ENCODE measurements at regions of chr12 and their contacts with region 1.

Region 1: GRCh38 chr12:77685112-77685511 is 145.6 kb upstream of the NAV3 start:
- DNase-seq: peak; percentile 55
- H3K4me3 ChIP-seq: no peak overlapping the region
- H3K27ac ChIP-seq: no peak overlapping the region
- H3K4me1 ChIP-seq: no peaks in the 10 kb centered on the region
- CTCF ChIP-seq: peak; percentile 78

Region 2: DNA sequence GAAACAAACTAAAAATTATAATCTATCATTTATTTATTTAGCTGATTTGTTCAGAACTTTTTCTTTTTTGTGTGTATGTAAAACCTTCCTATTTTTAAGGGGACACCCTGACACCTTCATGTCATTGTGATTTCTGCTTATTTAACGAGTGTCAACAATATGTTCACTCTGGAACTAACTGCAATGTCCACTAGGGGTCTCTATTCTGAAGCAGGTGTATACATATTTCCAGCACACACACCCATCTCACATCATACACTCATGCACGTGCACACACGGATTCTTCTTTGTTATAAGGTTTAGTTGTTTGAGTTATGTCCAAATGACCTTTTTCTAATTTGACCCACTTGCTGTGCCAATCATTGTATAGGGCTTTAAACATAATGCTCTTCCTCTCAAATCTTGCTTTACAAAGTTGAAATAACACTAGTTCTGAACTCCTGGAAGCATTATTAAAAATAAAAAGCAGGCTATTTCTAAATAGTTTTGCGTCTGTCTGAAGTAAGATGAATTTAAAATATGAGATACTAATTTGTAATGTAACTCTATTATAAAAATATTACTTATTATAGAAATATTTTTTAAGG is 635.3 kb before region 1 on chr12:
- CTCF ChIA-PET with region 1: no interaction called
- POLR2A ChIA-PET with region 1: no interaction called
- intact Hi-C with region 1: loop called (anchors 10 kb)
- DNase-seq: peak; percentile 79
- H3K4me3 ChIP-seq: no peak overlapping the region
- H3K27ac ChIP-seq: no peak overlapping the region
- H3K4me1 ChIP-seq: no peaks in the 10 kb centered on the region
- CTCF ChIP-seq: peak; percentile 97

Region 3: GRCh38 chr12:77256956-77257355 is 428.2 kb before region 1 on chr12:
- CTCF ChIA-PET with region 1: no interaction called
- POLR2A ChIA-PET with region 1: no interaction called
- intact Hi-C with region 1: no loop called
- DNase-seq: no peak
- H3K4me3 ChIP-seq: no peak overlapping the region
- H3K27ac ChIP-seq: no peak overlapping the region
- H3K4me1 ChIP-seq: no peaks in the 10 kb centered on the region
- CTCF ChIP-seq: no peak

Measured in OCI-LY7 (cell line).